B cell (primary cell): ENCODE measurements at regions of chr12 and their contacts with region 1.

Region 1: DNA sequence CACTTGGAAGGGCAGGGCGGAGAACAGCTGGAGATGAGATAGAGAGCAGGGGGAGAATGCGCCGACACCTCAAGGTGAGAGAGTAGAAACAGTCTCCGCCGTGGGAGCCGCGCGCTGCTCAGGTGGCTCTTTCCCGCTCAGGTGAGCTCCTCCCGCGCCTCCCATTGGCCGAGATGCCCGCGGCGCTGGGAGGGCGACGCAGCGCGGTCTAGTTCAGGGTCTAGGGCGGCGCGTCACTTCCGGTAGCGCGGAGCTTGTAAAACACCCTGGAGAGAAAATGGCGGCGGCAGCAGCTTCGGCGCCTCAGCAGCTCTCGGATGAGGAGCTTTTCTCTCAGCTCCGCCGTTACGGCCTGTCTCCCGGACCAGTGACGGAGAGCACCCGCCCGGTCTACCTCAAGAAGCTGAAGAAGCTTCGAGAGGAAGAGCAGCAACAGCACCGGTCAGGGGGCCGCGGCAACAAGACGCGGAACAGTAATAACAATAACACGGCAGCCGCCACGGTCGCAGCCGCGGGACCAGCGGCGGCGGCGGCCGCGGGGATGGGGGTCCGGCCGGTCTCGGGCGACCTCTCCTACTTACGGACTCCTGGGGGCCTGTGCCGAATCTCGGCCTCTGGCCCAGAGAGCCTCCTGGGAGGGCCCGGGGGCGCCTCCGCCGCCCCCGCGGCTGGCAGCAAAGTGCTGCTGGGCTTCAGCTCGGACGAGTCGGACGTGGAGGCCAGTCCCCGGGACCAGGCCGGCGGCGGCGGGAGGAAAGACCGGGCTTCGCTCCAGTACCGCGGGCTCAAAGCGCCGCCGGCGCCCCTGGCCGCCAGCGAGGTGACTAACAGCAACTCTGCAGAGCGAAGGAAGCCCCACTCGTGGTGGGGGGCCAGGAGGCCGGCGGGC is at the start of gene LEMD3:
- DNase-seq: peak; percentile 97
- ATAC-seq: peak; percentile 95
- H3K4me3 ChIP-seq: peak within 1 kb of the TSS; percentile 76 to 98 (median 94)
- H3K4me3 Mint-ChIP-seq: peak within 1 kb of the TSS; percentile 95
- H3K27ac ChIP-seq: peak within 1 kb of the TSS; percentile 82 to 98
- H3K27ac Mint-ChIP-seq: peak within 1 kb of the TSS; percentile 99
- H3K4me1 ChIP-seq: peaks cover 35 to 37% of the 10 kb centered on the region in 2 donors
- H3K4me1 Mint-ChIP-seq: peaks cover 38% of the 10 kb centered on the region
- H3K27me3 ChIP-seq: no peaks in the 10 kb centered on the region
- H3K27me3 Mint-ChIP-seq: no peaks in the 10 kb centered on the region
- CTCF ChIP-seq: peak; percentile 15
- total RNA-seq, gene LEMD3: 65.7 and 71.8 TPM in 2 replicates

Region 2: GRCh38 chr12:64491718-64492117 is 677.8 kb before region 1 on chr12:
- CTCF ChIA-PET with region 1: no interaction called
- POLR2A ChIA-PET with region 1: no interaction called
- intact Hi-C with region 1: no loop called
- DNase-seq: no peak
- ATAC-seq: no peak
- H3K4me3 ChIP-seq: no peak overlapping the region
- H3K4me3 Mint-ChIP-seq: no peak overlapping the region
- H3K27ac ChIP-seq: no peak overlapping the region
- H3K27ac Mint-ChIP-seq: no peak overlapping the region
- H3K4me1 ChIP-seq: no peaks in the 10 kb centered on the region
- H3K4me1 Mint-ChIP-seq: no peaks in the 10 kb centered on the region
- H3K27me3 ChIP-seq: no peaks in the 10 kb centered on the region
- H3K27me3 Mint-ChIP-seq: no peaks in the 10 kb centered on the region
- CTCF ChIP-seq: no peak

Region 3: GRCh38 chr12:64759035-64759901 is 410.3 kb before region 1 on chr12 and contains the start of gene GNS:
- CTCF ChIA-PET with region 1: no interaction called
- POLR2A ChIA-PET with region 1: no interaction called
- intact Hi-C with region 1: loop called (anchors 10 kb)
- DNase-seq: peak; percentile 94
- ATAC-seq: peak; percentile 92
- H3K4me3 ChIP-seq: peak within 1 kb of the TSS; percentile 67 to 89 (median 84)
- H3K4me3 Mint-ChIP-seq: peak within 1 kb of the TSS; percentile 94
- H3K27ac ChIP-seq: peak within 1 kb of the TSS; percentile 48 to 86
- H3K27ac Mint-ChIP-seq: peak within 1 kb of the TSS; percentile 94
- H3K4me1 ChIP-seq: peaks cover 24 to 25% of the 10 kb centered on the region in 2 donors
- H3K4me1 Mint-ChIP-seq: peaks cover 41% of the 10 kb centered on the region
- H3K27me3 ChIP-seq: no peaks in the 10 kb centered on the region
- H3K27me3 Mint-ChIP-seq: no peaks in the 10 kb centered on the region
- CTCF ChIP-seq: no peak
- total RNA-seq, gene GNS: 26.7 and 31.7 TPM in 2 replicates

Region 4: DNA sequence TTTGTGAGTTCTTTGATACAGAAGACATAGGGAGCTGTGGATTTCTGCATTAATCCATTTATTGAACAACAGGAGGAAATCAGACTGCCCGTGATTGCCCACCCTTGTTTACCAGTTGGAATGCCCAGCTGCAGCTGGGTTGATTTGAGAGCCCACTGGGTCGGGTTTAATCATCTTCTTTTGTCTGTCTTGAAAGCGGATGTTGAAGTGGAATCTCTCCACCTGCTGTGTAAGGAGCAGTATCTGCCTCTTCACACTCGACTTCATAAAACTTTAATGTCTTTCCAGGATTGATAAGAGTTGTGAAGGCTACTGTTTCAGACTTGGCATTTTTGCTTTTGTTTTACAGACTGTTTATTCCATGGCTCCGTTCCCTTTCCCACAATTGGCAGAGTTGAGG is 305.2 kb before region 1 on chr12:
- CTCF ChIA-PET with region 1: no interaction called
- POLR2A ChIA-PET with region 1: no interaction called
- intact Hi-C with region 1: no loop called
- DNase-seq: no peak
- ATAC-seq: no peak
- H3K4me3 ChIP-seq: no peak overlapping the region
- H3K4me3 Mint-ChIP-seq: no peak overlapping the region
- H3K27ac ChIP-seq: no peak overlapping the region
- H3K27ac Mint-ChIP-seq: no peak overlapping the region
- H3K4me1 ChIP-seq: no peaks in the 10 kb centered on the region
- H3K4me1 Mint-ChIP-seq: no peaks in the 10 kb centered on the region
- H3K27me3 ChIP-seq: peaks cover 0 to 7% (median 2%) of the 10 kb centered on the region in 4 experiments
- H3K27me3 Mint-ChIP-seq: peaks cover 33% of the 10 kb centered on the region
- CTCF ChIP-seq: no peak

Region 5: GRCh38 chr12:65209655-65210043 is 40.1 kb after region 1 on chr12:
- CTCF ChIA-PET with region 1: no interaction called
- POLR2A ChIA-PET with region 1: interaction called, 5 read pairs
- intact Hi-C with region 1: loop called (anchors 1 kb)
- DNase-seq: peak; percentile 62
- ATAC-seq: peak; percentile 47
- H3K4me3 ChIP-seq: peak overlapping the region in 2 of 5 experiments; percentile 3 to 34
- H3K4me3 Mint-ChIP-seq: peak overlapping the region; percentile 72
- H3K27ac ChIP-seq: peak overlapping the region; percentile 57 to 82
- H3K27ac Mint-ChIP-seq: peak overlapping the region; percentile 72
- H3K4me1 ChIP-seq: peaks cover 34 to 59% of the 10 kb centered on the region in 2 donors
- H3K4me1 Mint-ChIP-seq: peaks cover 57% of the 10 kb centered on the region
- H3K27me3 ChIP-seq: no peaks in the 10 kb centered on the region
- H3K27me3 Mint-ChIP-seq: no peaks in the 10 kb centered on the region
- CTCF ChIP-seq: no peak

Region 6: DNA sequence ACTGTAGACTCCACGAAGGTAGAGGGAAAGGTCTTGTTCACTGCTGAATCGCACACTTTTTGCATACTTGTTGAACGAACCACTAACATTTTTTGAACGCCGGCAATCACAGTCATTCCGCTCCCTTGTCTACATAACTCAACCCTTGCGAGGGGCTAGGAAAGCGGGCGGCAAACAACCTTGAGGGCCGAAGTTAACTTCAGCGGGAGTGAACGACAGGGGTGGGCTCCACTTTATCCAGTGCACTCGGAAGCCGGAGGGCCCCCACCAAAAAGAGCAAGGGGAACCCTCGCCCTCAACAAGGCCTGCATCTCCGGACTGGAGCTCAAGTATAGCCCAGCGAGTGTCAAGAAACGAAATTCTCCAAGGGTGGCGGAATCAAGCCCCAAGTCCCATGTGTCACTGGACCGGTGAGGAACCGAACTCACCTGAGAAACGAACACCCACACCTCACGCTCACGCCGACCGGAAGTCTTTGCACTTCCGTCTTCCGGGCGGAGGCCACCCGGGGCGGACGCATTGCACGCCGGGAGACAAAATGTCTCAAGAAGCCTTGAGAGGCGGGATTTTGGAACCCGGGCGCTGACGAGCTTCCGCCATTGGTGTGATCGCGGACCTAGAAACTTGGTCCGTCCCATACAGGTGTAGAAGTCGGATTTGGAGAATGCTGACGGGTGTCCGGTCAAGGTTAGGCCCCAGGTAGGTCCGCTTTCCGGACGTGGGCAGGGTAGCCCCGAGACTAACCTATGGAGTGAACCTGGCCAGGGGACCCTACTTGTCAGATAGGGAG is 960.9 kb after region 1 on chr12 and contains the start of gene LLPH:
- CTCF ChIA-PET with region 1: no interaction called
- POLR2A ChIA-PET with region 1: interaction called, 3 read pairs
- intact Hi-C with region 1: loop called (anchors 2 kb)
- DNase-seq: peak; percentile 90
- ATAC-seq: peak; percentile 90
- H3K4me3 ChIP-seq: peak within 1 kb of the TSS; percentile 72 to 100 (median 96)
- H3K4me3 Mint-ChIP-seq: peak within 1 kb of the TSS; percentile 98
- H3K27ac ChIP-seq: peak within 1 kb of the TSS; percentile 82 to 84
- H3K27ac Mint-ChIP-seq: peak within 1 kb of the TSS; percentile 94
- H3K4me1 ChIP-seq: peaks cover 17 to 20% of the 10 kb centered on the region in 2 donors
- H3K4me1 Mint-ChIP-seq: peaks cover 48% of the 10 kb centered on the region
- H3K27me3 ChIP-seq: no peaks in the 10 kb centered on the region
- H3K27me3 Mint-ChIP-seq: no peaks in the 10 kb centered on the region
- CTCF ChIP-seq: no peak
- total RNA-seq, gene LLPH: 21.1 and 23.4 TPM in 2 replicates